ENCODE measurements at regions of chr1 and their contacts with region 1.

Region 1: DNA sequence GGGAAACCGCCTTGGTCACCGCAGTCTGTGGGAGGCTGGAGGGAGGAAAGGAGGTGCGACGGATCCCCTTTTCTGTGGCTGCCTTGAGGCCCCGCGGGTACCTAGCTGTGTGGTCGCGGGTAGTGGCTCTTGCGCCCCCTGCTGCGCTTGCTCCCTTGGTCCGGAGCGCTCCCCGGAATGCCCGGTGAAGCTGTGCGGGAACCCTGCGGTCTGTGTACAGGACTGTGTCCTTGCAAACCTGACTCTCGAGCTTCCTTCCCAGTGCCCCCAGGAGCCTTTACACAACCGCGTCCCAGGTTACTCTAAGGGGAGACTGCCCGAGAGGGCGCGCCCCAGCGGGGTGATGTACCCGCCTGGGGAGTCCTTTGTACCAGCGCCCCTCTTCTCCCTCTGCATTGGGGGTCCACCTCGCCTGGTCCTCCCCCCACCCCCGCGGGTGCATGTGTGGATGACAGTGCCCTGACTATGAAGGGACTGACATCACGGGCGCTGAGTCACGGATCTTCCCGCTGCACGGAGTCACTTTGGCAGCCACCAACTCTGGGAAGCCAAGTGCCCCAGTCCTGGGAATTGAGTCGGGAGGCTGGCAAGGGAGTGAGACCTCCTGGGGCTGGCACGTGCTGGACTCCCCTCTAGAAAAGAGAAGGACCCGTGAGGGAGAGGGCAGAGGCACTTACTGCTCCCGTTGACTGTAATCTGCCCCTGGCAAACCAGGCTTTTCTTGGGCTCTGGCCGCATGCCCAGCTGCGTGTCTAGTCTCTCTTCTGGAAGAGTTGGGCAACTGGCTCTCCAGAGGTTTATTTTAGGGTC is 824 bp downstream of the IL6R start:
- DNase-seq: peak; percentile 67 to 80 (median 78)
- ATAC-seq: peak; percentile 60
- H3K4me3 ChIP-seq: peak overlapping the region; percentile 35 to 64
- H3K27ac ChIP-seq: peak overlapping the region; percentile 80 to 96 (median 88)
- H3K4me1 ChIP-seq: peaks cover 39% of the 10 kb centered on the region
- H3K27me3 ChIP-seq: no peaks in the 10 kb centered on the region
- CTCF ChIP-seq: peak; percentile 12 to 63 (median 50)
- POLR2A ChIP-seq: no peak

Region 2: GRCh38 chr1:154137888-154138287 is 268.1 kb before region 1 on chr1:
- intact Hi-C with region 1: no loop called
- DNase-seq: no peak
- ATAC-seq: no peak
- H3K4me3 ChIP-seq: no peak overlapping the region
- H3K27ac ChIP-seq: no peak overlapping the region
- H3K4me1 ChIP-seq: no peaks in the 10 kb centered on the region
- H3K27me3 ChIP-seq: no peaks in the 10 kb centered on the region
- CTCF ChIP-seq: no peak
- POLR2A ChIP-seq: no peak

Region 3: GRCh38 chr1:154423304-154423987 is 17.5 kb after region 1 on chr1:
- intact Hi-C with region 1: loop called (anchors 2 kb)
- DNase-seq: no peak
- ATAC-seq: no peak
- H3K4me3 ChIP-seq: no peak overlapping the region
- H3K27ac ChIP-seq: peak overlapping the region; percentile 2 to 68 (median 50)
- H3K4me1 ChIP-seq: peaks cover 83% of the 10 kb centered on the region
- H3K27me3 ChIP-seq: no peaks in the 10 kb centered on the region
- CTCF ChIP-seq: no peak
- POLR2A ChIP-seq: no peak

Region 4: DNA sequence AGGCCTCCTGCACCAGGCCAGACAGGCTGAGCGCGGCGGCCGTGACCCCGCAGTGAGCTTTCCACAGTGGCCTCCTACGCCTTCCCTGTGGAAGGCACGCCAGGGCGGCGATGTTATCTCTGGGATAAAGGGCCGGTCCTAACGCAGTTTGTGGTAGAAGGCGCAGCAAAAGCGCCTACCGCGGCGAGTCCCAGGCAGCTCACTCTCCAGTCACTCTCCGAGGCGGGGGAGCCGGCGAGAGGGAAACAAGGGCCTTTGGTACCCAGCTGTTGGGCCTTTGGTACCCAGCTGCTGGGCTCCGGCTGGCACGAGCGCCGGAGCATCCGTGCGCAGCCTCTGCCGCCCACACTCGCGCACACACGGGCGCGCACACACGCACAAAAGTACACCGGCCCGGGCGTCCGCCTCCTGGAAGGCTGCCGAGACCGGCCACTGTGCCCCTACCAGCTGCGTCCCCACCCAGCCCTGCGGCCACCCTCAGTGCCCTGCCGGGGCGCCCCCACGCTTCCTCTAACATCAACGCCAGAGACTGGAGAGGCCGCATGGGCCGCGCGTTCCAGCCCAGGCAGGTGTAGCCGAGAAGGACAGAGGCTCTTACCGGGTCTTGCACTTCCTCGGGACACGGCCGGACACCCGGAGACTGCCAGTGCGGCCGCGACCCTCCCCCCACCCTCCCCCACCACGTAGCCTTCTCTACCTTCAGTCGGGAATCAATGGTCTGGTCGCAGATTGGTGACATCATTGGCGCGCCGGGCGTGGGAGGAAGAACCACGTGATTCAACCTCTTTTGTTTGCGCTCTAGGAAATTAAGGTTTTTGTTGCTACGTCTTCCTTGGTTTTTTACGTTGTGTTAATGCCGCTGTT is 221.5 kb after region 1 on chr1:
- intact Hi-C with region 1: no loop called
- DNase-seq: peak; percentile 89 to 94 (median 92)
- ATAC-seq: peak; percentile 91
- H3K4me3 ChIP-seq: peak overlapping the region; percentile 63 to 99
- H3K27ac ChIP-seq: peak overlapping the region; percentile 78 to 95 (median 84)
- H3K4me1 ChIP-seq: peaks cover 13% of the 10 kb centered on the region
- H3K27me3 ChIP-seq: no peaks in the 10 kb centered on the region
- CTCF ChIP-seq: no peak
- POLR2A ChIP-seq: peak in 2 of 3 donors; percentile 52 to 58